HCT116 (cell line): ENCODE measurements at regions of chr1 and their contacts with region 1.

Region 1: DNA sequence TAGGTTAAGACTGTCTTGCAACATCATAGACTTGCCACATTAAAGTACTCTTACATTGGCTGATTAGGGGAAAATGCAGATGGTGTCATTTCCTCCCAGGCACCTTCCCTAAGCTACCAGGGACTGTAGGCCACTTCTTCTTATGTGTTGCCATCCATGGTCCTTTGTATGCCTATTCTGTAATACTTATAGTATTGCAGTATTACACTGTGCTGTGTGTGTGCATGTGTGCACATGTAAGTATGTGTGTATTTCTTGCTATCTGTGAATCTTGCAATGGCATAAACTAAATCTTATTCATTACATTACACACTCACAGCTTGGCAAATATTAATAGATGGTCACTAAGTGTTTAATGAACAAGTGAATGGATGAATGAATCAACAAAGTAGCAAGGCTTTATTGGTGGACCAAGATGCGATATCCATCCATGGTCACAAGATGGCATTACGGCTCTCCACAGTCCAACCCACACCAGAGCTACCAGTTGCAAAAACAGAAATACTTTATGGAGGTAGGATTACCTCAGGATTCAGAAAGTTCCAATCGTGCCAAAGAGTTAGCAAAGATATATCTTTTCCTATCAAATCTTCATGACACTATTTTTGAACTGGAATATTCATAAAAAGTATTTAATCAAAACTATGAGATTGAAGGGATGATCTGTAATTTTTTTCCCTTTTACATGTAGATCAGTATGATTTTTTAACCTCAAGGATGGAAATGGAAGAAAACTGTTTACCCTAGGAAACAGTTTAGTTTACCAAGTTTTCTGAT is 160.2 kb downstream of the DENND1B start:
- DNase-seq: peak; percentile 35
- ATAC-seq: peak; percentile 95
- H3K4me3 ChIP-seq: no peak overlapping the region
- H3K27ac ChIP-seq: no peak overlapping the region
- H3K4me1 ChIP-seq: no peaks in the 10 kb centered on the region
- H3K27me3 ChIP-seq: no peaks in the 10 kb centered on the region
- CTCF ChIP-seq: peak; percentile 47 to 66 (median 65); a peak in 5 of 6 replicates
- POLR2A ChIP-seq: no peak
- RAD21 ChIP-seq: peak; percentile 61

Region 2: GRCh38 chr1:197423006-197423405 is 192.1 kb before region 1 on chr1:
- CTCF ChIA-PET with region 1: no interaction called
- POLR2A ChIA-PET with region 1: no interaction called
- RAD21 ChIA-PET with region 1: no interaction called
- intact Hi-C with region 1: no loop called
- DNase-seq: no peak
- ATAC-seq: no peak
- H3K4me3 ChIP-seq: no peak overlapping the region
- H3K27ac ChIP-seq: no peak overlapping the region
- H3K4me1 ChIP-seq: no peaks in the 10 kb centered on the region
- H3K27me3 ChIP-seq: no peaks in the 10 kb centered on the region
- CTCF ChIP-seq: no peak
- POLR2A ChIP-seq: no peak
- RAD21 ChIP-seq: no peak

Region 3: GRCh38 chr1:197663178-197663953 is 48.3 kb after region 1 on chr1:
- CTCF ChIA-PET with region 1: no interaction called
- POLR2A ChIA-PET with region 1: no interaction called
- RAD21 ChIA-PET with region 1: no interaction called
- intact Hi-C with region 1: no loop called
- DNase-seq: no peak
- ATAC-seq: no peak
- H3K4me3 ChIP-seq: no peak overlapping the region
- H3K27ac ChIP-seq: no peak overlapping the region
- H3K4me1 ChIP-seq: no peaks in the 10 kb centered on the region
- H3K27me3 ChIP-seq: no peaks in the 10 kb centered on the region
- CTCF ChIP-seq: no peak
- POLR2A ChIP-seq: no peak
- RAD21 ChIP-seq: no peak

Region 4: DNA sequence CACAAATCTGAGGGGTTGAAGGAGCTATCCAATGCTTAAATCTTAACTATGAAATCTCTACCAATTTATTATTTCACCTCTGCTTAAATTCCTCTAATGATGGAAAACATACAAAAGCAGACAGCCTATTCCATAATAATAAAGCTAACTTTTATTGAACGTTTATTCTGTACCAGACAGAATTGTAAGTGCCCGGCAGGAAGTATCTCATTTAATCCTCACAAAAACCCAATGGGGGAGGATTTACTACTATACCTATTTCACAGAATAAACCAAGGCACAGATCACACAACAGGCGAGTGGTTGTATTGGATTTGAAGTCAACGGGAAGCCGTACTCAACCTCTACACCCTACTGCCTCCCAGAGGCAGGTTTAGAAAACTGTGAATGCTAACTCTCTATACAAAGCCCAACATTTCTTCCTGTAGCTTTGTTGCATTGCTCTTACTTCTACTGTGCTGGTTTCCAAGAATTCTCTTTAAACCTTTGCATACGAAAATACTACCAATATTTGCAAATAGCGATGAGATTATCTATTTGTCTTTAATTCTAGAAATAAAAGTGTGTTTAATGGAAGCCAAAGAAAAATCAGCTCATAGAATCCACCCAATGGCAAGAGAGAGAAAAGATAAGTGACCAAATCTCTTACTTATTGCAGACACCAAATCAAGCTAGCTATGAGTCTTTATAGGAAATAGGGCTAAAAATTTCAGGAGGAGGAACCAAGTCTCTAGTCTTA is 253.8 kb after region 1 on chr1:
- CTCF ChIA-PET with region 1: interaction called, 29 read pairs
- POLR2A ChIA-PET with region 1: no interaction called
- RAD21 ChIA-PET with region 1: interaction called, 3 to 5 read pairs
- intact Hi-C with region 1: loop called (anchors 1 kb)
- DNase-seq: peak; percentile 59
- ATAC-seq: peak; percentile 99
- H3K4me3 ChIP-seq: no peak overlapping the region
- H3K27ac ChIP-seq: no peak overlapping the region
- H3K4me1 ChIP-seq: no peaks in the 10 kb centered on the region
- H3K27me3 ChIP-seq: no peaks in the 10 kb centered on the region
- CTCF ChIP-seq: peak; percentile 60 to 71 (median 70)
- POLR2A ChIP-seq: no peak
- RAD21 ChIP-seq: peak; percentile 85

Region 5: DNA sequence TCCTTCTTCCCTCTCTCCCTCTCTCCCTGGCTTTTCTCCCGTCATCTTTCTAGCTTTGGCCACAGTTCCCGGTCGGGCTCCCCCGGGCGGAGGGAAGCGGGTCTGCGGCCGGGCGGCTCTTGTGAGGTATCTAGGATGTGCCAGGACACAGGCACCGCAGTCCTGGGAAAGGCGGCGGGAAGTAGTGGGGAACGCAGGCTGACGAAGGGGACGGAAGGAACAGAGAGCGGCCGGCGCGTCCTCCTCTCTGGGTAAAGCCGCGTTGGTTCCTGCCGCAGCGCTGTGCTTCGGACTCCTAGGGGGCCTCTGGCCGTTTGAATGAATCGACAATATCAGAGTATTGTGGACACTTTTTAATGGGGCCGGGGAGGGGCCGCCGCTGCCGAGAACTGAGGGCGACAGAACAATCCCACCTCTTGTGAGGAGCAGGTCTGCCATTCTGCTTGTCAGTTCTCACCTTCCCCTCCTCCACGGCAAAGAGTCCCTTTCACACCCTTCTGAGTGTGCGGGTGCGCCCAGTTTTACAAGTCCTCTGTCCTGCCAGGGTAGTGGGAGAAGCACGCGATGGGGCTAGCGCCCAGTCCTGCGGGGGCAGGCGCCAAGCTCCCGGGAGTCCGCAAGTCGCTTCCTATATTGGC is 300.9 kb after region 1 on chr1:
- CTCF ChIA-PET with region 1: interaction called, 13 read pairs
- POLR2A ChIA-PET with region 1: no interaction called
- RAD21 ChIA-PET with region 1: no interaction called
- intact Hi-C with region 1: loop called (anchors 2 kb)
- DNase-seq: peak; percentile 53
- ATAC-seq: peak; percentile 97
- H3K4me3 ChIP-seq: peak overlapping the region; percentile 36 to 54
- H3K27ac ChIP-seq: no peak overlapping the region
- H3K4me1 ChIP-seq: peaks cover 5 to 15% of the 10 kb centered on the region in 2 experiments; a peak in 3 of 4 replicates
- H3K27me3 ChIP-seq: no peaks in the 10 kb centered on the region
- CTCF ChIP-seq: peak; percentile 65 to 78 (median 75); a peak in 5 of 6 replicates
- POLR2A ChIP-seq: no peak
- RAD21 ChIP-seq: peak; percentile 57

Region 6: GRCh38 chr1:197924516-197925123 is 309.5 kb after region 1 on chr1:
- CTCF ChIA-PET with region 1: interaction called, 7 read pairs
- POLR2A ChIA-PET with region 1: no interaction called
- RAD21 ChIA-PET with region 1: interaction called in 1 of 2 experiments, 3 read pairs
- intact Hi-C with region 1: loop called (anchors 1 kb)
- DNase-seq: peak; percentile 51
- ATAC-seq: peak; percentile 96
- H3K4me3 ChIP-seq: no peak overlapping the region
- H3K27ac ChIP-seq: no peak overlapping the region
- H3K4me1 ChIP-seq: no peaks in the 10 kb centered on the region
- H3K27me3 ChIP-seq: no peaks in the 10 kb centered on the region
- CTCF ChIP-seq: peak; percentile 77 to 88 (median 84)
- POLR2A ChIP-seq: no peak
- RAD21 ChIP-seq: peak; percentile 86

Region 7: DNA sequence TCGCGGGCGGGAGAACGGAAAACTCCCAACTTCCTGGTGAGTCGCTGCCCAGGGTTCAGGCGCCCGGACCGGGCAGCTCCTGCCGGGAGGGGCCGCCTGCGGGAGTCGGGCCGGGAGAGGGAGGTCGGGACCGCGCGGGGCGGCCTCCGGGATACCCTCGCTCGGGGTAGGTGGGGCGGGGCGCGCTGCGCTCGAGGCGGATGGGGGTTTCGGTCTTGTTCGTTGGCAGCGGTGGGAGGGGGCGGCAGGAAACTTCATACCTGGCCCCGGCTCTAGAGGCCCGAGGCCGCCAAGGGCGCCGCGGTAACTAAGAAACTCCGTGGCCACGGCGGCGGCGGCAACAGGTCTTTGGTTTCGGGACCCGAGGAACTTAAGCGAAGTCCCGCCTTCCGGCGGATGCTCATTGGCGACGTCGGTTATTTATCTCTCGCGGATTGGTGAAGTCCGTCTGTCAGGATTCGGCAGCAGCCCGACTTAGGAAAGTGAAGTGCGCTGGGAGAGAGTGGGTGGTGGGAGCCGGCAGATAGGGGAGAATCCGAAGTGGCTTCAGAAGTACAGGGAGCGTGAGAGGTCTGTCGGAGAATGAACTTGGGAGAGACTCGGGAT is 542.2 kb after region 1 on chr1:
- CTCF ChIA-PET with region 1: no interaction called
- POLR2A ChIA-PET with region 1: no interaction called
- RAD21 ChIA-PET with region 1: no interaction called
- intact Hi-C with region 1: loop called (anchors 10 kb)
- DNase-seq: peak; percentile 87
- ATAC-seq: peak; percentile 67
- H3K4me3 ChIP-seq: peak overlapping the region; percentile 72 to 79
- H3K27ac ChIP-seq: peak overlapping the region; percentile 81
- H3K4me1 ChIP-seq: peaks cover 8 to 33% of the 10 kb centered on the region in 2 experiments; a peak in 3 of 4 replicates
- H3K27me3 ChIP-seq: no peaks in the 10 kb centered on the region
- CTCF ChIP-seq: no peak
- POLR2A ChIP-seq: peak; percentile 43
- RAD21 ChIP-seq: no peak